ENCODE measurements at regions of chr14 and their contacts with region 1.

Region 1: GRCh38 chr14:97788364-97788763 is 991.2 kb downstream of the VRK1 start:
- DNase-seq: no peak
- H3K4me3 Mint-ChIP-seq: no peak overlapping the region
- H3K27ac Mint-ChIP-seq: no peak overlapping the region
- H3K4me1 Mint-ChIP-seq: peaks cover 27% of the 10 kb centered on the region
- H3K27me3 Mint-ChIP-seq: no peaks in the 10 kb centered on the region

Region 2: GRCh38 chr14:97620066-97620465 is 168.3 kb before region 1 on chr14:
- intact Hi-C with region 1: loop called (anchors 5 kb)
- DNase-seq: no peak
- H3K4me3 Mint-ChIP-seq: peak overlapping the region; percentile 59
- H3K27ac Mint-ChIP-seq: peak overlapping the region; percentile 84
- H3K4me1 Mint-ChIP-seq: peaks cover 47% of the 10 kb centered on the region
- H3K27me3 Mint-ChIP-seq: no peaks in the 10 kb centered on the region

Measured in activated T-helper 2 cell treated with anti-CD3 and anti-CD28 coated beads, Interferon-gamma antibody, Interleukin-2, Interleukin-4, amounts not matched to agents 10 μg/mL and 5 μg/mL and 100 μg/mL, durations not matched to agents 14 hours and 24 hours and 36 hours (primary cell).